H1 (cell line): ENCODE measurements at regions of chr16 and their contacts with region 1.

Region 1: GRCh38 chr16:87316923-87317749 is at the start of gene C16orf95:
- DNase-seq: peak; percentile 84 to 99
- H3K4me3 ChIP-seq: peak within 1 kb of the TSS; percentile 77 to 99 (median 94)
- H3K27ac ChIP-seq: peak within 1 kb of the TSS; percentile 88
- H3K4me1 ChIP-seq: peaks cover 0 to 5% (median 3%) of the 10 kb centered on the region in 4 experiments; a peak in 5 of 7 replicates
- H3K27me3 ChIP-seq: no peaks in the 10 kb centered on the region
- CTCF ChIP-seq: peak; percentile 34 to 73 (median 41)
- EP300 ChIP-seq: no peak
- POLR2A ChIP-seq: peak; percentile 84 to 92
- RAD21 ChIP-seq: peak in 1 of 2 experiments; percentile 32; a peak in 1 of 4 replicates
- total RNA-seq, gene C16orf95: 5.4 and 6.0 TPM in 2 replicates

Region 2: DNA sequence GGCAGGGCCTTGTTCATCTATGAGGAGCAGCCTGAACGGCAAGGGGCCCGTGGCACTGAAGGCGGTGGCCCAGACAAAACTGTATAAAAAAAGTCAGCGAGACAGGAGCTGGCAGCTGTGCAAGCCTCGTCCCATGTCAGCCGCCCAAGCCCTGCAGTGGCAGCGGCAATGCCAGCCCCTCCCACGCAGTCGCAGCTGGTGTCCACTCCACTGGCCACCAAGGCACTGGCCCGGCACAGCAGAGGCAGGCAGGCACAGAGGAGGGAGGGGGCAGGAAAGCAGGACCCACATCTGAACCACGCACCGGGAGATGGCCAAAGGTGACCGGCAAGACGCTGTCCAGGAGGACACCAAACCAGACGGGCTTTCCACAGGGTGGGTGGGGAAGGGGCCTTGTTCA is 16.0 kb after region 1 on chr16:
- CTCF ChIA-PET with region 1: interaction called, 3 read pairs
- POLR2A ChIA-PET with region 1: interaction called, 17 read pairs
- DNase-seq: no peak
- H3K4me3 ChIP-seq: no peak overlapping the region
- H3K27ac ChIP-seq: no peak overlapping the region
- H3K4me1 ChIP-seq: no peaks in the 10 kb centered on the region
- H3K27me3 ChIP-seq: no peaks in the 10 kb centered on the region
- CTCF ChIP-seq: no peak
- EP300 ChIP-seq: no peak
- POLR2A ChIP-seq: no peak
- RAD21 ChIP-seq: no peak

Region 3: DNA sequence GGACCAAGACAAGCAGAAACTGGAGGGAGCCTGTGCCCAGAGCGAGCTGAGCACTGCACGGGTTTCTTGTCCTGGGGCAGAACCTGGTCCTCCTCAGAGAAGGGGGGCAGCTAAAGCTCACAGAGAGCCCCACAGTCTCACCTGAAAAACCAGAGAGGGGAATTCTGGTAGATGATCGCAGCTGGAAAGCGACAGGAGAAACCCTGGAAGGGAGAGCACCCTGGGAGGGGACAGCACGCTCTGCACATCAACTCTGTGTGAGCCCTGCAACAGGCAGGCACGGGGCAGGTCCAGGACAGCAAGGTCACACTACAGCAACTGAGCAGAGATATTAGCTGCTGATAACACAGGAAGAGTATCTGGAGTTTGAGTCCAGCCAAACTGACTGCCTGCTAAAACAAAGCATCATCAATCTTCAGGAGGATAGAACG is 157.4 kb after region 1 on chr16:
- CTCF ChIA-PET with region 1: no interaction called
- POLR2A ChIA-PET with region 1: no interaction called
- DNase-seq: no peak
- H3K4me3 ChIP-seq: no peak overlapping the region
- H3K27ac ChIP-seq: no peak overlapping the region
- H3K4me1 ChIP-seq: peaks cover 0 to 5% (median 0%) of the 10 kb centered on the region in 4 experiments; a peak in 3 of 7 replicates
- H3K27me3 ChIP-seq: no peaks in the 10 kb centered on the region
- CTCF ChIP-seq: no peak
- EP300 ChIP-seq: no peak
- POLR2A ChIP-seq: no peak
- RAD21 ChIP-seq: no peak